BJ (cell line): ENCODE measurements at regions of chr1 and their contacts with region 1.

Region 1: DNA sequence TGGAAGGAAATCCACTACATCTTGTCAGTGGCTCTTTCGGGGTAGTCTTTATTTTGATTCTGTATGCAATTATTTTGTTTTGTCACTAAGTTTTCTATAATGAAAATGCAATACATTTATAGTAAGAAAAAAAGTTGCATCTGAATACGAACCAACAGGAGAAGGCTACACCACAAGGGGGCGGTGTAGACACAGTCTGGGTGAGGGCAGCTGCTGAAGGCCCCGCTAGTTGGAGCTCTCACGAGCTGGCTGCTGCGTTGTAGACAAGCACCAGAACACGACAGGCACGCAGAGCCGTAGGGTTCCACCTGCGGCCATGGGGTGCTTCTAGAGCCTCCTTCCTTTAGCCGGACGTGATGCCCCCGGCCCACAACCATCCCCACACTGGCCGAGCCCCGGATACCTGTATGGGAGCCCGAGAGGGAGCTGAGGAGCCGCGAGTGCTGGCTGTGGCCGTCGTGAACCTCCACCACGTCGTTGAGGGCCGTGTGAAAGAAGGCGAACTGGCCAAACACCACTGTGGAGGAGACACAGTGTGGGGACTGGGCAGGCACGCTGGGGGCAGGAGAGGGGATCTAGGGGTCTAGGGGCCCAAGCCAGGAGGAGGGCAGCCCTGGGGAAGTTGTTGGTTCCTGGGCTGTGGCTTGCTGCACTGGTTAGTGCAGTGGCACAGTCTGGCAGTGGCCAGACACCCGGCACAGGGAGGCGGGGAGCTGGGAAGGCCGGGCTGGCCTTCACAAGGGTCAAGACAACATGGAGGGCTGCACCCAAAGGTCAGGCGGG is 160.8 kb downstream of the ZSCAN20 start:
- DNase-seq: peak; percentile 16
- H3K4me3 ChIP-seq: no peak overlapping the region
- H3K27me3 ChIP-seq: no peaks in the 10 kb centered on the region
- CTCF ChIP-seq: peak; percentile 100

Region 2: GRCh38 chr1:33025181-33025571 is 608.0 kb before region 1 on chr1:
- CTCF ChIA-PET with region 1: no interaction called
- POLR2A ChIA-PET with region 1: interaction called, 24 read pairs
- DNase-seq: no peak
- H3K4me3 ChIP-seq: no peak overlapping the region
- H3K27me3 ChIP-seq: no peaks in the 10 kb centered on the region
- CTCF ChIP-seq: no peak

Region 3: GRCh38 chr1:33560680-33561079 is 72.5 kb before region 1 on chr1:
- CTCF ChIA-PET with region 1: no interaction called
- POLR2A ChIA-PET with region 1: no interaction called
- DNase-seq: no peak
- H3K4me3 ChIP-seq: no peak overlapping the region
- H3K27me3 ChIP-seq: no peaks in the 10 kb centered on the region
- CTCF ChIP-seq: no peak

Region 4: DNA sequence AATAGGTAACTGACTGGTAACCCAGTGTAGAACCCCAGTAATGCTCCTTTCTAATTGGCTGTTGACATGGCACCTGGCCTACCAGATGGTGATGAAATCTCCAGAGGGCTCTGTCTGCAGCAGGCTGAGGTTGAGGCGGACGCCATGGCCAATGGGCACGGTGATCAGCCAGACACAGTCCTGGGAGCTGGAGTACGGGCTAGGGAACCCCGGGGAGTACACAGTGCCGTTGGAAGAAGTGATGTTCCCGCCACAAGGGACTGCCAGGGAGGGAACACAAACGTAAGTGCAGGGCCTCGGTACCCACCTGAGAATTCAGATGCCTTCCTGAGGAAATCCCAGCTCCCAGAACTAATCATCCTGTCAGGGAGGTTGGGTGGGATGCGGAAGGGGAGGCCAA is 30.9 kb before region 1 on chr1:
- CTCF ChIA-PET with region 1: interaction called, 10 read pairs
- POLR2A ChIA-PET with region 1: no interaction called
- DNase-seq: no peak
- H3K4me3 ChIP-seq: no peak overlapping the region
- H3K27me3 ChIP-seq: no peaks in the 10 kb centered on the region
- CTCF ChIP-seq: no peak

Region 5: GRCh38 chr1:33654267-33654834 is 21.1 kb after region 1 on chr1:
- CTCF ChIA-PET with region 1: interaction called, 10 read pairs
- POLR2A ChIA-PET with region 1: no interaction called
- DNase-seq: no peak
- H3K4me3 ChIP-seq: no peak overlapping the region
- H3K27me3 ChIP-seq: no peaks in the 10 kb centered on the region
- CTCF ChIP-seq: peak; percentile 69

Region 6: GRCh38 chr1:34597877-34598514 is 964.8 kb after region 1 on chr1:
- CTCF ChIA-PET with region 1: interaction called, 42 read pairs
- POLR2A ChIA-PET with region 1: no interaction called
- DNase-seq: no peak
- H3K4me3 ChIP-seq: no peak overlapping the region
- H3K27me3 ChIP-seq: no peaks in the 10 kb centered on the region
- CTCF ChIP-seq: peak; percentile 90

Region 7: GRCh38 chr1:34742667-34743270 is 1109.6 kb after region 1 on chr1:
- CTCF ChIA-PET with region 1: interaction called, 11 read pairs
- POLR2A ChIA-PET with region 1: no interaction called
- DNase-seq: no peak
- H3K4me3 ChIP-seq: no peak overlapping the region
- H3K27me3 ChIP-seq: peaks cover 3% of the 10 kb centered on the region
- CTCF ChIP-seq: peak; percentile 99